ENCODE measurements at regions of chr17 and their contacts with region 1.

Region 1: DNA sequence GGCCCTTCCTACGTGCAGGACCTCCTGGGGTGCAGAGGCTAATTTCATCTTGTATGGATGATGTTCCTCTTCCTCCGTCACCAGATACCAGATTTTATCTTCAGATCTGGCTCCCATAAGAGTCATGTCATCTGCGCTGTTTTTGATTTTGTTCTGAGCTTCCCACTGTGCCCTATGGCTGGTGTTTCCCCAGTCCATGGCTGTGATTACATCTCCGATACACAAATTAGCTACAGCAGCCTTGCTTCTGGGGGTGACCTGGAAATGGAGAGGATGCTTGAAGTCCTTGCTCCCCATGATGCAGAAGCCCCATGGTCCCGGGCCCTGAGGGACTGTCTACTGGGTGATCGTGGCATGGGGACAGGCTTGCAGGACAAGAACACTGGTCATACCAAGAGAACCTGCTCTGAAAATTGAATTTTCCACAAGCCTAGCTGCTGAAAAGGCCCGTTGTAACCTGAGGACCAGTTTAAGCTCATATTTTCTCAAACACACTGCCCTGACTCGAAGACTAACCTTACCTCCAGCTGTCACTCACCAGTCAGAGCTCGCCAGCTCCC is 69.0 kb downstream of the KCNJ12 start:
- DNase-seq: no peak
- ATAC-seq: no peak
- H3K4me3 ChIP-seq: no peak overlapping the region
- H3K27ac ChIP-seq: no peak overlapping the region
- H3K4me1 ChIP-seq: no peaks in the 10 kb centered on the region
- H3K27me3 ChIP-seq: peaks cover 3% of the 10 kb centered on the region
- CTCF ChIP-seq: no peak
- POLR2A ChIP-seq: no peak
- RAD21 ChIP-seq: no peak

Region 2: GRCh38 chr17:20967771-20968170 is 477.4 kb before region 1 on chr17:
- CTCF ChIA-PET with region 1: no interaction called
- POLR2A ChIA-PET with region 1: no interaction called
- dilution Hi-C with region 1: no loop called
- in situ Hi-C with region 1: no loop called
- intact Hi-C with region 1: no loop called
- DNase-seq: peak; percentile 17
- ATAC-seq: no peak
- H3K4me3 ChIP-seq: no peak overlapping the region
- H3K27ac ChIP-seq: no peak overlapping the region
- H3K4me1 ChIP-seq: no peaks in the 10 kb centered on the region
- H3K27me3 ChIP-seq: peaks cover 46% of the 10 kb centered on the region
- CTCF ChIP-seq: no peak
- POLR2A ChIP-seq: no peak
- RAD21 ChIP-seq: no peak

Region 3: GRCh38 chr17:21318439-21318838 is 126.7 kb before region 1 on chr17:
- CTCF ChIA-PET with region 1: no interaction called
- POLR2A ChIA-PET with region 1: no interaction called
- dilution Hi-C with region 1: no loop called
- in situ Hi-C with region 1: no loop called
- intact Hi-C with region 1: loop called (anchors 5 kb)
- DNase-seq: no peak
- ATAC-seq: no peak
- H3K4me3 ChIP-seq: no peak overlapping the region
- H3K27ac ChIP-seq: no peak overlapping the region
- H3K4me1 ChIP-seq: no peaks in the 10 kb centered on the region
- H3K27me3 ChIP-seq: no peaks in the 10 kb centered on the region
- CTCF ChIP-seq: no peak
- POLR2A ChIP-seq: no peak
- RAD21 ChIP-seq: no peak

Region 4: GRCh38 chr17:21339011-21339410 is 106.2 kb before region 1 on chr17:
- CTCF ChIA-PET with region 1: no interaction called
- POLR2A ChIA-PET with region 1: no interaction called
- dilution Hi-C with region 1: no loop called
- in situ Hi-C with region 1: no loop called
- intact Hi-C with region 1: no loop called
- DNase-seq: no peak
- ATAC-seq: no peak
- H3K4me3 ChIP-seq: no peak overlapping the region
- H3K27ac ChIP-seq: no peak overlapping the region
- H3K4me1 ChIP-seq: no peaks in the 10 kb centered on the region
- H3K27me3 ChIP-seq: peaks cover 3% of the 10 kb centered on the region; the same call in 1 of the 2 replicates
- CTCF ChIP-seq: no peak
- POLR2A ChIP-seq: no peak
- RAD21 ChIP-seq: no peak

Region 5: GRCh38 chr17:21376759-21377690 is 68.1 kb before region 1 on chr17:
- CTCF ChIA-PET with region 1: no interaction called
- POLR2A ChIA-PET with region 1: no interaction called
- dilution Hi-C with region 1: no loop called
- in situ Hi-C with region 1: no loop called
- intact Hi-C with region 1: no loop called
- DNase-seq: peak; percentile 8
- ATAC-seq: peak; percentile 57
- H3K4me3 ChIP-seq: peak overlapping the region; percentile 34
- H3K27ac ChIP-seq: no peak overlapping the region
- H3K4me1 ChIP-seq: peaks cover 4% of the 10 kb centered on the region; the same call in 1 of the 2 replicates
- H3K27me3 ChIP-seq: peaks cover 69% of the 10 kb centered on the region
- CTCF ChIP-seq: no peak
- POLR2A ChIP-seq: no peak
- RAD21 ChIP-seq: no peak

Region 6: DNA sequence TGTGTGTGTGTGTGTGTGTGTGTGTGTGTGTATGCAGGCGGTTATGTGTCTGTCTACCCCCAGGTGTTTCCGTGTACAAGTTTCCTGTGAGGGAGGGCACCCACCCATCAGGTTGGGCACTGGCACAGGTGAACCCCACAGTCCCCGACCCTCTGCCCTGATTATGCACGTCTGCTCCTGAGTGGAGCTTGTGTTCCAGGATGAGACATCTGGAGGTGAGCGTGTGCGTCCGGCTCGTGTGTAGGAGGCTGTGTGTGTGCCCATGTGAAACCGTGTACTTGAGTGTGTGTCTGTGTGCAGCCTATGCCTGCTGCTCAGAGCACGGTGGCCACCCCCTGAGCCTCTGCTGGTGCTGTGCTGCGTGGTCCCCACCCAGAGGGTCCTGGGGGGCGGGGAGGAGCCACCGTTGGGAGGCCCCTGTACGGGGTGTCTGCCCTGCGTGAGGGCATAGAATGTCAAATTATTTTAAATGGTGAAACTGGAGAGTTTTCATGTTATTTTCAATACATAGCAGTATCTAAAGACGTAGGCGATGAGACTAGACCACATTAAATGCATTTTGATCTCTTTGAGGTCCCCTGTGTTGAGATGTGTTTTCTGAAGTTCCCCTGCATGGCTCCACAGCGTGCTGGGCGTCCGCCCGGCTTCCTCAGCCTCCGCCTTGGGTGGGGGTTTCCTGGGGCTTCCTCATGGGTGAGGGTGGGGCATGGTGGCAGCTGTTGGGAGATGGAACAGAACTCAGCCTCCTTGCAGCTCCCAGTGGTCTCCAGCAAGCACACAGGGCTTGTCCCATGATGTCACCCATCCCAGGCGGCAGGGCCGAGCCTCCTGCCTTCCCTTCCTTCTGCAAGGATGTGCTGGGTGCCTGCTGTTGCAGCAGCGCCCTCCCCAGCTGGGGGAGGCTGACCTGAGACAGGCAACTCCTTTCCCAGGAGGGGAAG is 25.6 kb before region 1 on chr17:
- CTCF ChIA-PET with region 1: no interaction called
- POLR2A ChIA-PET with region 1: no interaction called
- dilution Hi-C with region 1: no loop called
- in situ Hi-C with region 1: no loop called
- intact Hi-C with region 1: no loop called
- DNase-seq: no peak
- ATAC-seq: no peak
- H3K4me3 ChIP-seq: no peak overlapping the region
- H3K27ac ChIP-seq: no peak overlapping the region
- H3K4me1 ChIP-seq: peaks cover 2% of the 10 kb centered on the region
- H3K27me3 ChIP-seq: peaks cover 2% of the 10 kb centered on the region; the same call in 1 of the 2 replicates
- CTCF ChIP-seq: no peak
- POLR2A ChIP-seq: no peak
- RAD21 ChIP-seq: no peak

Measured in IMR-90 (cell line).